ENCODE measurements at regions of chr3 and their contacts with region 1.

Region 1: DNA sequence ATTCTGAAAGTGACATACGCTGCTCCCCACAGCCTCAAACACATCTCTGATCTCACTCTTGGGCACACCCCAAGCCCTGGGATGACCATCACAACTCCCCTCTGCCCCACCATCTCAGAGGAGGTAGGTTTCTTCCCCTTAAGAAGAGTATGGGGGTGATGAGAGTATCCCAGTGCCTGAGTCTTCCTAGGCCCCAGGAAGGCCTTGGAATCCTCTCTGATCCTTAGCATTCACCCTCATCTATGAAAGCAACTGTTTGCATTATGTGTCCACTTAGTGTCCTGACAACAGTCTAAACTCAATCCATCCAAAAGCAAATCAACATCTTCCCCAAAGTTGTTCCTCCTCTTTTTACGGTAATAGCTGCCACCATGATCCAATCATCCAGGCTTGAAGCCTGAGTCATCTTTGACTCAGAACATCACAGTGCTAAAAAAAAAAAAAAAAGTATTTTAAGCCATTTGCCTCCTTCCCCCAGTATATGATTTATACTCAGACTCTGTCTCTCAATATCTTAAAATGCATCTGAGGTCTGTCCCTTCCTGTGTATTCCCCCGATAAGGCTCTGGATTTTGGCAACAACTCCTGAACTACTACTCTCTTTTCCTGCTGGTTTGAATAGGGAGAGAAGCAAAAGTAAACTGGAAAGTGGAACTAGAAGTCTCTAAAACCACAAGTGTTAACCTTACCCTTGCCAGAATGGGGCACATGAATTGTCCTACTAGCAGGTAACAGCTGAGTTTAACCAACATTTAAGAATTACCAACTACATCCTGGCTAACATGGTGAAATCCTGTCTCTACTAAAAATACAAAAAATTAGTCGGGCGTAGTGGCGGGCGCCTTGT is 22.5 kb downstream of the POPDC2 start:
- DNase-seq: no peak
- ATAC-seq: peak; percentile 16

Region 2: GRCh38 chr3:119600732-119601131 is 37.2 kb before region 1 on chr3:
- intact Hi-C with region 1: loop called (anchors 5 kb)
- DNase-seq: peak; percentile 65
- ATAC-seq: peak; percentile 76

Measured in left ventricle myocardium superior (tissue), 1 donor.